AG04449 (cell line): ENCODE measurements at regions of chr10 and their contacts with region 1.

Region 1: DNA sequence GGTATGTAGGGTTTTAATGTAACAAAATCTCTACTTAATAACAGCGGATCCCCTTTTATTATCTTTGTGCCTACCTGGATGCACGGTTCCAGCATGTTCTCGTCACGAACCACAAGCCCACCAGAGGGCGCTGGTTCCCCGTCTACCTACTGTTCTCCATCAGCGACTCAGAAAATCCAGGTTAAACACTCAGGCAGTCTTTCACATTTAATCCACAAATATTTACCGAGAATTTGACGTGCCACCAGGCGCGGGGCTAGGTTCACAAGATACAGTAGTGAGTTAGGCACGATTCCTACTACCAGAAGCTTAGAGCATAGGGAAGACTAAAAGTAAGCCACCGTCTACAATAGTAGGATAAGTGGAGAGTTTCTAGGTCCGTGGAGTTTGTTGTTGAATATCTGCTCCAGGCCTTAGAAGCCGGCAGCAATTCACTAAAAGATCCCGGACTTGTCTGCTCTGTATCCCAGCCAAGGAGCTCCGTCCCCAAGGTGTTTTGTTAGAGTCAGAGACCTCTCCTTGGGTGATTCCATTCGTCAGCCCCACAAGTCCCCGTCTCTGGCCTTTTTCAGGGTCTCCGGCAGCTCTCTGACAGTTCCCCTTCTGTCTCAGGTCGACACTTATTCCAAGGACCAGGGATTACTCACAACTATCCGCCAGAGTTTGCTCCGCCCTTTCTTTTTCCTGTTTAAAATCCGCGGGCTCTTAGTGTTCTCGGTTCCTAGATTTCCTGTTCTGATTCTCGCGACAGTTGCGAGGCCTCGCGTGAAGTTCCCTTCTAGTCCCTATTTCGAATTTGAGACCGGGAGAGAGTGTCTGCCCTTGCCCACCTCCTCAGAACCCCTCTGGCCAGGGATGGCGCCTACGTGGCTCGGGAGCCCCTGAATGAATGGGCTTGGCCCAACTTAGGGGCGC is 1.5 kb upstream of the KAZALD1 start:
- DNase-seq: peak; percentile 50
- H3K4me3 ChIP-seq: peak overlapping the region; percentile 96
- CTCF ChIP-seq: peak; percentile 88

Region 2: GRCh38 chr10:101075775-101076174 is 15.5 kb after region 1 on chr10:
- CTCF ChIA-PET with region 1: interaction called, 1,481 read pairs
- POLR2A ChIA-PET with region 1: no interaction called
- DNase-seq: no peak
- H3K4me3 ChIP-seq: no peak overlapping the region
- CTCF ChIP-seq: no peak

Region 3: DNA sequence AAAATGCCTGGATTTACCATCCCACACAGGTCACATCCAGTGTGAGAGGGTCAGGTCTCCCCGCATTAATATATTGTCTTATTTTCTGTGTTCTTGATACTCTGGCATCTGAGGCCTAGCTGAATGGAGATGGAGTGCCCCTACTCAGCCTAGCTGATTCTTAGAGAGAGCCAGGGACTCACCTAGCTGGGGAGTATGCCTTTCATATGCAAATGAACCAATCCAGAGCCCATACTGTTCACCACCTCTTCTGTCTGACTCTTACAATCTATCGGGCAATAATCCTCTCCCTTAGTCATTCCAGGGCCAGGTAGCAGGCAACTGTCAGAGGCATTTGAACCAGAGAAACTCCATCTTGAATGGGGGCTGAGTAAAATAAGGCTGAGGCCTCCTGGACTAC is 122.6 kb after region 1 on chr10:
- CTCF ChIA-PET with region 1: no interaction called
- POLR2A ChIA-PET with region 1: no interaction called
- DNase-seq: no peak
- H3K4me3 ChIP-seq: no peak overlapping the region
- CTCF ChIP-seq: no peak